ENCODE measurements at regions of chr1 and their contacts with region 1.

Region 1: GRCh38 chr1:156565519-156565918 is 6.8 kb downstream of the IQGAP3 start:
- DNase-seq: no peak
- H3K4me3 ChIP-seq: no peak overlapping the region
- H3K4me1 ChIP-seq: no peaks in the 10 kb centered on the region
- H3K27me3 ChIP-seq: no peaks in the 10 kb centered on the region

Region 2: GRCh38 chr1:156517746-156518145 is 47.8 kb before region 1 on chr1:
- in situ Hi-C with region 1: loop called (anchors 5 kb)
- DNase-seq: no peak
- H3K4me3 ChIP-seq: no peak overlapping the region
- H3K4me1 ChIP-seq: no peaks in the 10 kb centered on the region
- H3K27me3 ChIP-seq: no peaks in the 10 kb centered on the region; the same call in 1 of the 2 replicates